Activated CD4-positive, alpha-beta memory T cell treated with anti-CD3 and anti-CD28 coated beads for 36 hours (primary cell): ENCODE measurements at regions of chr1 and their contacts with region 1.

Region 1: GRCh38 chr1:244835276-244836134 is at the start of gene COX20:
- DNase-seq: peak; percentile 89
- H3K4me3 Mint-ChIP-seq: peak within 1 kb of the TSS; percentile 94
- H3K27ac Mint-ChIP-seq: peak within 1 kb of the TSS; percentile 99
- H3K4me1 Mint-ChIP-seq: peaks cover 45% of the 10 kb centered on the region
- H3K27me3 Mint-ChIP-seq: no peaks in the 10 kb centered on the region
- total RNA-seq, gene COX20: 23.4 to 27.8 TPM

Region 2: DNA sequence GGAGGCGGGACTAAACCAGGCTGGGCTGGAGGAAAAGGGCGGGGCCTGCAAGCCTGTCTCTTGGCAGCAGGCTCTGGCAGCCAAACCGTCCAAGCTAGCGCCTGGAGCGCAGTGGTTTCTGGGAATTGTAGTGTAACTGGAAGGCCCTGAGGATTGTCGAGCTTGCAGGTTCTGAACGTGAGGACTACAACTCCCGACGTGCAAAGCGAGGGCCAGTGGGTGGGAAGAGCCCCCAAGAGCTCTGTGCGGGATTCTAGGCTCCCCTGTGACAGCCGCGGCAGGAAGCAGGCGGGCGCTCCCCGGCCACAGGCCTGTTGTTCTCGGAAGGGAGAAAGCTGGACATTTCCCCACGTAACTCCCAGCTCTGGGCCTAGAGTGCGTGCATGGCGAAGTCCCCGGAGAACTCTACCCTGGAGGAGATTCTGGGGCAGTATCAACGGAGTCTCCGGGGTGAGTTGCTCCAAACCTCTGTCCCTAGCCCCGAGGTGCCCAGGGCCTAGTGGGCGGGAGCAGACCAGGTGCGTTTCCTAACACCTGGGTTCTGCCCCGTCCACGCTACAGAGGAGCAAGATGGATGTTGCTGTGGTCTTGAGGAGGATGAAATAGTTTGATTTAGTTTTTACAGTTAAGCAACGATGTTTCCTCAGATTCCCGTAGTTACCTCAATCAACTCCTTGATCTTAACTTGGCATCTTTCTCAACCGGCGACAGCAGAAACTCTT is 1579.6 kb before region 1 on chr1 and contains the start of gene SDCCAG8:
- CTCF ChIA-PET with region 1: no interaction called
- POLR2A ChIA-PET with region 1: no interaction called
- intact Hi-C with region 1: loop called (anchors 5 kb)
- DNase-seq: peak; percentile 97
- H3K4me3 Mint-ChIP-seq: peak within 1 kb of the TSS; percentile 95
- H3K27ac Mint-ChIP-seq: peak within 1 kb of the TSS; percentile 100
- H3K4me1 Mint-ChIP-seq: peaks cover 40% of the 10 kb centered on the region
- H3K27me3 Mint-ChIP-seq: peaks cover 3% of the 10 kb centered on the region
- total RNA-seq, gene SDCCAG8: 20.7 to 23.2 TPM

Region 3: DNA sequence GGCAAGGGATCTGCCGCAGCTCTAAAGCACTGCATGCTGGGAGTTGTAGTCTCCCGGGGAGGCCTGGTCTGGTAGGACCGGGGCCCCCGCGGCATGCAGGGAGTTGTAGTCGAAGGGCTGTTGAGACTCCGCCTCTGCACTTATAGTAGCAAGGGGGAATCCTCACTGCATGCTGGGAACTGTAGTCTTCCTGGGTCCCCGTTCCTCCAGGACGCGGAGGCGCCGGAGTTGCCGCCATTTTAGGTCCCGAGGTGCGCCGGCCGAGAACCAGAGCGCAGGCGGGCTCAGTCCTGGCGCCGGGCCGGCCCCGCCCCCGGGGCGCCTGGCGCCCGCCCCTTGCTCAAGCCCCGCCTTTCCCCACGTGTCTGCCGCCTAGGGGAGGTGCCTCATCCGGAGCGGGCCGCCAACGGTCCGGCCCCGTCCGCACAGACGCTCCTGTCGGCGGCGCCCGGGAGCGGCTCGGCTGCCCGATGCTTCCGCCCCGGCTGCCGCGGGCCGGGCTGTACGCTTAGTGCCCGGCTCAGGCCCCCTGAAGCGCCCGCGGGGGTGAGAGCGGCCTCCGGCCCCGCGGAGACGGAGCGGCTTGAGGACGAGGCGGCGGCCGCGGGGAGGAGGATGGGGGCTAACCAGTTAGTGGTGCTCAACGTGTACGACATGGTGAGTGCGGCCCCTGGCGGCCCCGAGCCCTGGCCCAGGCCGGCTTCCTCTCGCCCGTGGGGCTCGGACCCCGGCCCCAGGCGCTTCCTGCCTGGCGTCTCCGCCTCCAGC is 182.6 kb before region 1 on chr1 and contains the start of gene DESI2:
- CTCF ChIA-PET with region 1: interaction called, 3 read pairs
- POLR2A ChIA-PET with region 1: interaction called, 6 read pairs
- intact Hi-C with region 1: loop called (anchors 1 kb)
- DNase-seq: peak; percentile 98
- H3K4me3 Mint-ChIP-seq: peak within 1 kb of the TSS; percentile 79
- H3K27ac Mint-ChIP-seq: peak within 1 kb of the TSS; percentile 79
- H3K4me1 Mint-ChIP-seq: peaks cover 22% of the 10 kb centered on the region
- H3K27me3 Mint-ChIP-seq: no peaks in the 10 kb centered on the region
- total RNA-seq, gene DESI2: 24.8 to 25.6 TPM

Region 4: DNA sequence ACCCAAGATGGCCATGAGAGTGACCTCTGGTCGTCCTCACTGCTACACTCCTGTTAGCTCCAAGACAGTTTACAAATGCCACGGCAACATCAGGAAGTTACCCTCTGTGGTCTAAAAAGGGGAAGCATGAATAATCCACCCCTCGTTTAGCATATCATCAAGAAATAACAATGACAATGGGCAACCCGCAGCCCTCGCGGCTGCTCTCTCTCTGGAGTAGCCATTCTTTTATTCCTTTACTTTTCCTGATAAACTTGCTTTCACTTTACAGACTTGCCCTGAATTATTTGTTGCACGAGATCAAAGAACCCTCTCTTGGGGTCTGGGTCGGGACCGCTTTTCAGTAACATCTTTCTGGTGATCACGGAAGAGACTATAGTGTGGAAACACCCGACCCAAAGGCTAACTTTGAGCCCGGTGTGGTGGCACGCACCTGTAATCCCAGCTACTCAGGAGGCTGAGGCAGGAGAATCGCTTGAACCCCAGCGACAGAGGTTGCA is 19.9 kb before region 1 on chr1:
- CTCF ChIA-PET with region 1: no interaction called
- POLR2A ChIA-PET with region 1: interaction called, 3 read pairs
- intact Hi-C with region 1: loop called (anchors 1 kb)
- DNase-seq: no peak
- H3K4me3 Mint-ChIP-seq: no peak overlapping the region
- H3K27ac Mint-ChIP-seq: no peak overlapping the region
- H3K4me1 Mint-ChIP-seq: peaks cover 12% of the 10 kb centered on the region
- H3K27me3 Mint-ChIP-seq: peaks cover 17% of the 10 kb centered on the region

Region 5: DNA sequence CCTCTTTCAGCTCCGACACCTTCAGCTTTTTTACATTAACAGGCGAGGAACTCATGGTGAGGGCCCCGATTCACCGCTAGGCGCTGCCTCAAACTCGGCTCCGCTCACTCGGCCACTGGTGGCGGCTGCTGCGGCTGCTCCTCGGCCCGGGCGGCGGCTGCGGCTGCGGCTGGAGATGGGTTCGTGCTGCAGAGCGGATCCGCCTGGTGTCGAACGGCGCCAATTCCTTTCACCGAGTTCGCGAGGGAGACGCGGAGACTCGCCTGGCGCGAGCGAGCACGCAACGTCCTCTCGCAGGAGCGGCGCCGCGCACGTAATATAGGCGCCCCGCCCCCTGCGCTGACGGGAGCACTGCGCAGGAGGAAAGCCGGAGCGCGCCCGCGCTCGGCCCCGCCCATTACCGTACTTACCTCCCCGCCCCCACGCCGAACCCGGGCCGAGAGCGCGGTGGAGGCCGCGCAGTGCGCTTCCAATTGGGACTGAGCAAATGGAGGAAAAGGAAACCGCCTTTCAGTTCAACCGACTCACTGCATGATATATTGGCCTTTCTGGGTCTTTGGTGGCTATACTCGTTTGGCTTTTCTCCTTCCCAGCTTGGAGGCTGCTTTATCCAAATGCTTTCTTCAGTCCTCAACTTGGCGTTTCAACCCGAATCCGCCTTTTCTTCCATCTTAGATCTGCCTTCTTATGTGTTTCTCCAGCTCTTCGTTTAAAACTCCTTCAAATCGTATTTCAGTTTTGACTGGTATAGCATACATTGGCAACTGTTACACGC is 28.9 kb after region 1 on chr1 and contains the start of gene HNRNPU:
- CTCF ChIA-PET with region 1: interaction called, 32 read pairs
- POLR2A ChIA-PET with region 1: interaction called, 219 read pairs
- intact Hi-C with region 1: loop called (anchors 1 kb)
- DNase-seq: peak; percentile 97
- H3K4me3 Mint-ChIP-seq: peak within 1 kb of the TSS; percentile 99
- H3K27ac Mint-ChIP-seq: peak within 1 kb of the TSS; percentile 97
- H3K4me1 Mint-ChIP-seq: peaks cover 38% of the 10 kb centered on the region
- H3K27me3 Mint-ChIP-seq: no peaks in the 10 kb centered on the region
- total RNA-seq, gene HNRNPU: 410 to 421 TPM

Region 6: GRCh38 chr1:245008761-245009160 is 173.3 kb after region 1 on chr1:
- CTCF ChIA-PET with region 1: no interaction called
- POLR2A ChIA-PET with region 1: no interaction called
- intact Hi-C with region 1: no loop called
- DNase-seq: no peak
- H3K4me3 Mint-ChIP-seq: no peak overlapping the region
- H3K27ac Mint-ChIP-seq: no peak overlapping the region
- H3K4me1 Mint-ChIP-seq: no peaks in the 10 kb centered on the region
- H3K27me3 Mint-ChIP-seq: no peaks in the 10 kb centered on the region